ENCODE measurements at regions of chr17 and their contacts with region 1.

Region 1: DNA sequence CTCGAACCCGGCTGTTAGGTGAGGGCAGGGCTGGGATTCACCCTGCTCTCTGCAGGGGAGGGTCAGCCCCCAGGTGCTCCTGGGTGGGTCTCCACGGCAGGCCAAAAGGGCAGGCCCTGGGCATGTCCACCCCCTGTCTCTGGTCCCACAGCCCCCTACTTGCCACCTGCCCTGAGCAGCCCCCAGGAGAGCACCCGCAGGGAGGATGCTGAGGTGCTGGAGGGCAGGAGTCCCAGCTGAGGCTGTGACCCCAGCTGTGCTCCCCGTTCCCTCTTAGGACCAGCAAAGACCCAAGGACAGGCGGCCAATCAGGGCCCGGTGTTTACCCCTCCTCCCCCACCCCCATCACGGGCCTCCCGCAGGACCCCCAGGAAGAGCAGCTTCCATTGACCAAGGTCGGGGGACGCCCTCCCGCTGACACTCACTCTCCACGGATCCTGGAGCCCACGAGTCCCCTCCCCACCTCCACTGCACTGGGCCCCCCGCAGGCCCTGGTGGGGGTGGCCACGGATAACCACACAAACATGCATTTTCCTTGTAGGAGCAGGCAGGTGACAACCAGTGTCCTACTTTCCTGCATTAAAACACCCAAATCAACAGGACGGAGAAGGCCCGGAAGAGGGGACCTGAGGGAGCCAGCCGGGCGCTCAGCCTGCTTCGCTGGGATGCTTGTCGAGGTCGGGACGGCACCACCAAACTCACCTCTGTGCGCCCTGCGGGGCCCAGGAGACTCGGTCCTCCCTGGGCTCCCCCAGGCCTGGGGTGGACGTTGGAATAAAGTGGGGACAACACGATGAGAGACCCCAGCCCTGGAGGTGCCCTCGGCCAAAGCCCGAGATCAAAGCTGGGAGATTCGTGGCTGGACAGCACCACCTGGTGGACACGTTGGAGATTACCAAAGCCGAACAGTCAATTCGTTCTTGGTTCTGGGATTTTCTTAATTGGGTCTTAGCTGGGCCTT is 22.5 kb upstream of the ENPP7 start:
- DNase-seq: peak; percentile 38
- ATAC-seq: peak; percentile 86
- H3K4me3 ChIP-seq: no peak overlapping the region
- H3K27ac ChIP-seq: no peak overlapping the region
- H3K4me1 ChIP-seq: no peaks in the 10 kb centered on the region
- H3K27me3 ChIP-seq: peaks cover 3% of the 10 kb centered on the region; the same call in 1 of the 2 replicates
- CTCF ChIP-seq: peak; percentile 67
- POLR2A ChIP-seq: no peak
- RAD21 ChIP-seq: peak; percentile 71

Region 2: DNA sequence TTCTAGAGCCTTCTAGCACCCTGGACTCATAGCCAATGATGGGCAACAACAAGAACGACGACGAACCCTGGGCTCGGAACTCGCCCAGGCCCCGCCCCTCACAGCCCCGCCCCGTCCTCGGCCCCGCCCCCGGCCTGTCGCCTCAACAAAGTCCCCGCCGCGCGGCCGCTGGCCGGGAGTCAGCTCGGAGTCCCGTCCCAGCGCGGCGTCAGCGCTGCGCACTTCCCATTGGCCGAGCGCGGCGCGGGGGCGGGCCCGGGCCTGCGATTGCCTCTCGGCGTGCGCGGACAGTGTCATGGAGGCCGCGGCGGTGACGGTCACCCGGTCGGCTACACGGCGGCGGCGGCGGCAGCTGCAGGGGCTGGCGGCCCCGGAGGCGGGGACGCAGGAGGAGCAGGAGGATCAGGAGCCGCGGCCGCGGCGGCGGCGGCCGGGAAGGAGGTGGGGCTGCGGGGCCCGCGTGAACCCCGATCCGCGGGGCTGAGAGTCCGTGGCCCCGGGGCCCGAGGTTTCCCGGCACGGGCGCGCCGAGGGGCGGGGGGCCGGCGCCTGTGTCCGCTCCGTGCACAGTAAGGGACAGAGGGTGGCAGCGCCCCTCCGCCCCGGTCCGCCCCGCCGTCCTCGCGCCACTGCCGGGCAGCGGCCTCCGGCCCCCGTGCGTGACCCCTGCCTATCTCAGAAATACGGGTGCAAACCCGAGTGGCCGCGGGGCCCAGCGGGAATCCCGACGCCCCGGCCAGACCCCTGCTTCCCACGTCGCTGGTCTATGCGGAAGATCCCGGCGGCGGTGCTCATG is 633.4 kb before region 1 on chr17 and contains the start of gene ENGASE:
- CTCF ChIA-PET with region 1: no interaction called
- POLR2A ChIA-PET with region 1: no interaction called
- dilution Hi-C with region 1: no loop called
- in situ Hi-C with region 1: loop called (anchors 25 kb)
- intact Hi-C with region 1: no loop called
- DNase-seq: peak; percentile 82
- ATAC-seq: peak; percentile 99
- H3K4me3 ChIP-seq: peak within 1 kb of the TSS; percentile 89
- H3K27ac ChIP-seq: peak within 1 kb of the TSS; percentile 37; the same call in 1 of the 2 replicates
- H3K4me1 ChIP-seq: 0 out of 2 replicates have a peak, but pooled peaks cover 2% of the 10 kb centered on the region
- H3K27me3 ChIP-seq: peaks cover 6% of the 10 kb centered on the region
- CTCF ChIP-seq: no peak
- POLR2A ChIP-seq: peak; percentile 49; the same call in 1 of the 2 replicates
- RAD21 ChIP-seq: no peak
- total RNA-seq, gene ENGASE: 2.5 and 3.9 TPM in 2 replicates

Region 3: DNA sequence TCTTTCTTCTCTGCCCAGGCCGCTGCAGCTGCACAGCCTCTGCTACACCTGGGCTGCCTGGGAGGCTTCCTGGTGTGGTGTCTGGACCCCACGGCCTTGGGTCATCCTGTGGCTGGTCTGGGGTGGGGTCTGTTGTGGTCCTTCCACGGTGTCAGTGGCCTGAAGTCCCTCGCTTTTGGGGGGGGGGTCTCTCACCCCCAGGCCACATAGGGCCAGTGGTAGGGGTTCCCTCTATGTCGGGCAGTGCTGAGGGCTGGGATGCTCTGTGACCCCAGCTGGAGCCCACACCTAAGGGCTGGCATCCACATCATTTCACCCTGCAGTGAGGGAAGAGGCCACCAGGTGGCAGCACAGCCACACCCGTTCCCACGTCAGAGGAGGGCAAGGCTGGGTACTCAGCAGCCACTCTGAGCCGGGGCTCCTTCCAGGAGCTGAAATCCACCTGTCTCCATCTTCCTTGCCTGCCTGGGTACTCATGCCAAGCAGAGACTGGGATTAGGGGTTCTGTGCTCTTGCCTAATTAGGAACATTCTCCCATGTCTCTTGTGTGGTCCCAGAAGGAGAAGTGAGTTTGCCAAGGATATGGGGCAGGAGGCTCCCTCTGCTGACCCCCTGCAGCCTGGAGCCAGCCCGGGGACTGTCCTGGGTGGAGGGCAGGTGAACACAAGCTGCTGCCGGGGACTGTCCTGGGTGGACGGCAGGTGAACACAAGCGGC is 620.6 kb before region 1 on chr17:
- CTCF ChIA-PET with region 1: interaction called, 3 read pairs
- POLR2A ChIA-PET with region 1: no interaction called
- dilution Hi-C with region 1: no loop called
- in situ Hi-C with region 1: loop called (anchors 25 kb)
- intact Hi-C with region 1: loop called (anchors 1 kb)
- DNase-seq: peak; percentile 27
- ATAC-seq: peak; percentile 92
- H3K4me3 ChIP-seq: no peak overlapping the region
- H3K27ac ChIP-seq: no peak overlapping the region
- H3K4me1 ChIP-seq: no peaks in the 10 kb centered on the region
- H3K27me3 ChIP-seq: no peaks in the 10 kb centered on the region
- CTCF ChIP-seq: peak; percentile 81
- POLR2A ChIP-seq: no peak
- RAD21 ChIP-seq: peak; percentile 77

Region 4: GRCh38 chr17:79400989-79401703 is 307.1 kb before region 1 on chr17:
- CTCF ChIA-PET with region 1: interaction called, 3 read pairs
- POLR2A ChIA-PET with region 1: no interaction called
- dilution Hi-C with region 1: no loop called
- in situ Hi-C with region 1: no loop called
- intact Hi-C with region 1: loop called (anchors 2 kb)
- DNase-seq: peak; percentile 36
- ATAC-seq: peak; percentile 100
- H3K4me3 ChIP-seq: peak overlapping the region; percentile 34
- H3K27ac ChIP-seq: no peak overlapping the region
- H3K4me1 ChIP-seq: no peaks in the 10 kb centered on the region
- H3K27me3 ChIP-seq: peaks cover 33% of the 10 kb centered on the region
- CTCF ChIP-seq: peak; percentile 86
- POLR2A ChIP-seq: no peak
- RAD21 ChIP-seq: peak; percentile 41